HEK293 (cell line): ENCODE measurements at regions of chr14 and their contacts with region 1.

Region 1: DNA sequence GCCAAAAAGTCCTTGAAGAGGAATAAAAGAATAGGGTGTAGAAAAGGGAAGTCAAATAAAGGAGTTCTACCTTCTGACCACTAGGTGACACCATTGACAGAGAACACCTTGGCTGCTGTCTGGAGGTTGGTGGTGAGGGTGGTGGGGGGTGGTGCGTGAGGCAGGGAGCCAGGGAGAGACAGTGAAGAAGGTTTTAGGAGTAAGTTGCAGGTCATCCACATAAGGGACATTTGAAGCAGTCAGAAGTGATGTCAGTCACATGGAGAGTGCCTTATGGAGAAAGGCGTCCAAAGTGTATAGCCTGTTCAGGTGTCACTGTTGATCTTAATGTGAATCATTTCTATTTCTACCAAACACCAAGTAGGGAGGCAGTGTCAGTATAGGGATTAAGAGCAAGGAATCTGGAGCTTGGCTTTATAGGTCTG is 279.3 kb upstream of the DDHD1 start:
- H3K4me3 ChIP-seq: no peak overlapping the region
- H3K27ac ChIP-seq: no peak overlapping the region
- H3K4me1 ChIP-seq: no peaks in the 10 kb centered on the region
- CTCF ChIP-seq: peak; percentile 66

Region 2: DNA sequence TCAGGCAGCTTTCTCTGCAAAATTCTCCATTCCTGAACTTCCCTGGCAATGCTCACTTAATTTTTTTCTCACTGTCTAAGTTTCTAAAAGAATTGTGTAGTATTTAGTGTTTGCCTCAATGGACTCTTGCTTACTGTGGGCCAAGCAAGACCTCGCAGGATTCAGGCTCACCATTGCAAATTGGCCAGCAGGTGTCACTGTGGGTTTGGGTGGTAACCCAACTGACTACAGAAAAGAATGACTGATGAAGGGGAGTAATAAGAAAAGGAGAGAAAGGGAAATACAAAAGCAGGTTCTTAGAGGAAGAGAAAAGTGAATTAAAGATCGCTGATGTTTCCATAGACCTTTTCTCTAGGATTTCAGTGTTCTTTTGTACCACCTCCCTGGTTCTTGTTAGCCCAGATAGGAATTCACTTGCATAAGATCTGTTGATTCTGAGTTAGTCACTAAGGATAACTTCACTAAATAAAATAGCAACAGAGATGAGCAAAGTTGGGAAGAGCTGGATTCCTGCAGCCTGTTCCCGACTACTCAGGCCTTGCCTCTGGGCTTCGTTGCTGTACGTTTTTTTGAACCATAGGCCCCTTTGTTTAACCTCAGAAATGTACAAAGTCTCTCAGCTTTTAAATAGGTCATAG is 107.2 kb after region 1 on chr14:
- CTCF ChIA-PET with region 1: interaction called, 13 read pairs
- POLR2A ChIA-PET with region 1: no interaction called
- H3K4me3 ChIP-seq: no peak overlapping the region
- H3K27ac ChIP-seq: no peak overlapping the region
- H3K4me1 ChIP-seq: no peaks in the 10 kb centered on the region; the same call in 1 of the 2 replicates
- CTCF ChIP-seq: peak; percentile 34; the same call in 1 of the 2 replicates